ENCODE measurements at regions of chr6 and their contacts with region 1.

Region 1: GRCh38 chr6:50213146-50213545 is 163.4 kb upstream of the DEFB112 start:
- DNase-seq: no peak
- H3K4me3 ChIP-seq: no peak overlapping the region
- H3K27ac ChIP-seq: no peak overlapping the region
- H3K4me1 ChIP-seq: no peaks in the 10 kb centered on the region
- H3K27me3 ChIP-seq: no peaks in the 10 kb centered on the region
- CTCF ChIP-seq: no peak
- EP300 ChIP-seq: no peak
- POLR2A ChIP-seq: no peak

Region 2: GRCh38 chr6:51314965-51315364 is 1101.8 kb after region 1 on chr6:
- in situ Hi-C with region 1: no loop called
- intact Hi-C with region 1: loop called (anchors 5 kb)
- DNase-seq: no peak
- H3K4me3 ChIP-seq: no peak overlapping the region
- H3K27ac ChIP-seq: no peak overlapping the region
- H3K4me1 ChIP-seq: no peaks in the 10 kb centered on the region
- H3K27me3 ChIP-seq: no peaks in the 10 kb centered on the region
- CTCF ChIP-seq: no peak
- EP300 ChIP-seq: no peak
- POLR2A ChIP-seq: no peak

Measured in transverse colon (tissue), 4 donors.